Heart left ventricle (tissue), 16 donors: ENCODE measurements at regions of chr19 and their contacts with region 1.

Region 1: GRCh38 chr19:1540365-1540925 is 16.6 kb downstream of the PLK5 start:
- DNase-seq: no peak
- ATAC-seq: peak in 2 of 4 donors; percentile 64 to 71
- H3K4me3 ChIP-seq: no peak overlapping the region
- H3K27ac ChIP-seq: peak overlapping the region in 2 of 12 donors; percentile 17 to 49
- H3K4me1 ChIP-seq: peaks cover 0 to 20% (median 3%) of the 10 kb centered on the region in 12 donors
- H3K27me3 ChIP-seq: peaks cover 0 to 31% (median 1%) of the 10 kb centered on the region in 9 donors
- CTCF ChIP-seq: no peak
- POLR2A ChIP-seq: no peak

Region 2: GRCh38 chr19:1324806-1325567 is 215.5 kb before region 1 on chr19:
- intact Hi-C with region 1: no loop called
- DNase-seq: peak in 4 of 5 donors; percentile 31 to 67 (median 65)
- ATAC-seq: peak; percentile 10 to 88 (median 73)
- H3K4me3 ChIP-seq: peak overlapping the region in 11 of 12 donors; percentile 26 to 60 (median 50)
- H3K27ac ChIP-seq: peak overlapping the region in 2 of 12 donors; percentile 8 to 35
- H3K4me1 ChIP-seq: peaks cover 0 to 14% (median 7%) of the 10 kb centered on the region in 12 donors
- H3K27me3 ChIP-seq: peaks cover 0 to 40% (median 13%) of the 10 kb centered on the region in 9 donors
- CTCF ChIP-seq: no peak
- POLR2A ChIP-seq: no peak

Region 3: GRCh38 chr19:1789261-1790041 is 249.0 kb after region 1 on chr19:
- intact Hi-C with region 1: loop called in 2 of 10 experiments (anchors 10 kb)
- DNase-seq: no peak
- ATAC-seq: peak in 2 of 4 donors; percentile 31 to 53
- H3K4me3 ChIP-seq: peak overlapping the region in 10 of 12 donors; percentile 9 to 46 (median 29)
- H3K27ac ChIP-seq: peak overlapping the region in 1 of 12 donors; percentile 22
- H3K4me1 ChIP-seq: peaks cover 0 to 14% (median 0%) of the 10 kb centered on the region in 12 donors
- H3K27me3 ChIP-seq: peaks cover 4 to 48% (median 21%) of the 10 kb centered on the region in 9 donors
- CTCF ChIP-seq: no peak
- POLR2A ChIP-seq: no peak